CD4-positive, alpha-beta memory T cell (primary cell): ENCODE measurements at regions of chr9 and their contacts with region 1.

Region 1: GRCh38 chr9:5628530-5629311 is at the start of gene RIC1:
- DNase-seq: peak; percentile 89 to 90 (median 90)
- H3K4me3 ChIP-seq: peak within 1 kb of the TSS; percentile 82 to 86
- H3K4me3 Mint-ChIP-seq: peak within 1 kb of the TSS; percentile 97 to 99 (median 98)
- H3K27ac ChIP-seq: peak within 1 kb of the TSS; percentile 89
- H3K27ac Mint-ChIP-seq: peak within 1 kb of the TSS; percentile 92 to 99 (median 97)
- H3K4me1 ChIP-seq: peaks cover 76% of the 10 kb centered on the region
- H3K4me1 Mint-ChIP-seq: peaks cover 44 to 65% (median 53%) of the 10 kb centered on the region in 4 donors
- H3K27me3 ChIP-seq: no peaks in the 10 kb centered on the region
- H3K27me3 Mint-ChIP-seq: no peaks in the 10 kb centered on the region
- total RNA-seq, gene RIC1: 26.3 to 27.1 TPM

Region 2: DNA sequence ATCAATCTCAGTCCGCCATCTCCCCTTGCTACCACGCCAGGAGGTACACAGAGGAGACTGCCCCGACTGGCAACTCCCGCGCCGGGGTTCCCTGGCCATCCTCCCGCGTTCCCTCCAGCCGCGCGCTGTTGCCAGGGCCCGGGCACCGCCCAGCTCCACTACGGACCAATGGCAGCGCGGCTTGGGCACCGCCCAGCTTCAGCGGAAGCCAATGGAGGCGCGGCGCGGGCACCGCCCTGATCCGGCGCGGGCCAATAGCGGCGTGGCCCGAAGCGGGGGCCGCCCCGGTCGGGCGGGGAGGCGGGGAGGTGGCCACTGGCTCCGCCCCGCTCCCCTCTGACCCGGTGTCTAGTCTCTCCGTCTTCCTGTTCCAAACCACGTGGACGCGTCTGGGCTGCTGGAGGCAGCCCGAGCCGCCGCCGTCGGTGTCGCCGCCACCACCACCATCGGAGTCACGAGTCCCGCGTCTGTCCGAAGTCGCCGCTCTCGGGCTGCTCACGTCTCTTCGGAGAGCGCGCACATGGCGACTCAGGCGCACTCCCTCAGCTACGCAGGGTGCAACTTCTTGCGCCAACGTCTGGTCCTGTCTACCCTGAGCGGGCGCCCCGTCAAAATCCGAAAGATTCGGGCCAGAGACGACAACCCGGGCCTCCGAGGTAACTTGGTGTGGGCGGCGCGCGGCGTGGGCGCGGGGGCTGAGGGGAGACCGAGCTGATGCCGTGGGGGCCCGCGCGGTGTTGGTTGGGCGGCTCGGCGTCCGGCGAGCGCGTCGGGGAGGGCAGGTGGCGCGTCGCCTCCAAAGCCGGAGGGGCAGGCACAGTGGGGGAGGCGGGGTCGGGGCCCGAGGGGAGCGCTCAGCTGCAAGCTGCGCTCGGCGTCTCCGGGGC is 835.9 kb before region 1 on chr9 and contains the start of gene RCL1:
- CTCF ChIA-PET with region 1: no interaction called
- POLR2A ChIA-PET with region 1: interaction called, 14 read pairs
- intact Hi-C with region 1: loop called (anchors 1 kb)
- DNase-seq: peak; percentile 95 to 98 (median 97)
- H3K4me3 ChIP-seq: peak within 1 kb of the TSS; percentile 83 to 88
- H3K4me3 Mint-ChIP-seq: peak within 1 kb of the TSS; percentile 93 to 97 (median 95)
- H3K27ac ChIP-seq: peak within 1 kb of the TSS; percentile 70
- H3K27ac Mint-ChIP-seq: peak within 1 kb of the TSS; percentile 84 to 97 (median 96)
- H3K4me1 ChIP-seq: peaks cover 23% of the 10 kb centered on the region
- H3K4me1 Mint-ChIP-seq: peaks cover 29 to 52% (median 38%) of the 10 kb centered on the region in 4 donors
- H3K27me3 ChIP-seq: no peaks in the 10 kb centered on the region
- H3K27me3 Mint-ChIP-seq: peaks cover 0 to 4% of the 10 kb centered on the region in 2 donors
- total RNA-seq, gene RCL1: 15.2 to 17.8 TPM

Region 3: GRCh38 chr9:5450359-5451091 is 178.2 kb before region 1 on chr9 and contains the start of gene CD274:
- CTCF ChIA-PET with region 1: interaction called, 9 read pairs
- POLR2A ChIA-PET with region 1: interaction called, 37 read pairs
- intact Hi-C with region 1: loop called (anchors 1 kb)
- DNase-seq: peak; percentile 78 to 82 (median 80)
- H3K4me3 ChIP-seq: peak within 1 kb of the TSS; percentile 65 to 67
- H3K4me3 Mint-ChIP-seq: peak within 1 kb of the TSS; percentile 87 to 96 (median 94)
- H3K27ac ChIP-seq: peak within 1 kb of the TSS; percentile 97
- H3K27ac Mint-ChIP-seq: peak within 1 kb of the TSS; percentile 92 to 99 (median 95)
- H3K4me1 ChIP-seq: peaks cover 77% of the 10 kb centered on the region
- H3K4me1 Mint-ChIP-seq: peaks cover 50 to 89% (median 62%) of the 10 kb centered on the region in 4 donors
- H3K27me3 ChIP-seq: no peaks in the 10 kb centered on the region
- H3K27me3 Mint-ChIP-seq: no peaks in the 10 kb centered on the region
- total RNA-seq, gene CD274: 16.2 to 23.0 TPM

Region 4: DNA sequence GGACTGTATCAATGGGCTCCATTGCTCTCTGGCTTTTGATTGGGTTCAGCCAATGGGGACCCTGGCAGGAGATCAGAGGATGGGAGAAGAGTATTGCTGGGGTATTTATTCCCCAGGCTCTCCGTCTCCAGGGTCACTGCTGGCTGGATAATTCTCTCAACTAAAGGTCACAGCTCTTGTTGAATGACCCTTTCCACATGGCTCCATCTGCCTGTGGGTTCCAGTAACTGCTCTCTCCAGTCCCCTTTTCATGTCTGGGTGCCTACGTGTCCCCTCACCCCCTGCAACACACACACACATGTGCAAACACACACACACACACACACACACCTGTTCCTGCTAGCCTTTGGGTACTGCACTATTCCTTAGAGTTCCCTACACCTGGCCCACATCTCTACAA is 53.7 kb before region 1 on chr9:
- CTCF ChIA-PET with region 1: no interaction called
- POLR2A ChIA-PET with region 1: no interaction called
- intact Hi-C with region 1: no loop called
- DNase-seq: no peak
- H3K4me3 ChIP-seq: no peak overlapping the region
- H3K4me3 Mint-ChIP-seq: no peak overlapping the region
- H3K27ac ChIP-seq: no peak overlapping the region
- H3K27ac Mint-ChIP-seq: peak overlapping the region in 3 of 7 donors; percentile 16 to 58 (median 49)
- H3K4me1 ChIP-seq: peaks cover 4% of the 10 kb centered on the region
- H3K4me1 Mint-ChIP-seq: peaks cover 1 to 16% (median 9%) of the 10 kb centered on the region in 4 donors
- H3K27me3 ChIP-seq: no peaks in the 10 kb centered on the region
- H3K27me3 Mint-ChIP-seq: no peaks in the 10 kb centered on the region

Region 5: DNA sequence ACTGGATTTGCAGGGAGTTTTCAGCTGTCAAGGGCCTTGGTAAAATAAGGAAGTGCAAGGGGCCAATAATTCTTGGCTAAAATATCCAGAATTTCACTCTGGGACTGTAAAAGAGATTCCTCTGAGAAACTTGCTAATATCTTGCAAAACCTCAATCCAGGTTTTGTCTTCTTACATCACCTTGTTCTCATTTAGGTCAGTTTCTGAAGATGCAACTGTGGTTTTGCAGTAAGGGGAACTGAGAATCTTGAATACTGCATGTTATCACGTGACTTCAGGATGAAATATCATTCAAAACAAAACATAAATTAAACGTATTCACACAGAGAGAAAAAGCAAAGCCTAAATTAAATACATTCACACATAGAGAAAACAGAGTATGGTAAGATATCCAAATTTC is 34.8 kb before region 1 on chr9:
- CTCF ChIA-PET with region 1: interaction called, 14 read pairs
- POLR2A ChIA-PET with region 1: interaction called, 7 read pairs
- intact Hi-C with region 1: loop called (anchors 5 kb)
- DNase-seq: no peak
- H3K4me3 ChIP-seq: no peak overlapping the region
- H3K4me3 Mint-ChIP-seq: no peak overlapping the region
- H3K27ac ChIP-seq: no peak overlapping the region
- H3K27ac Mint-ChIP-seq: peak overlapping the region in 2 of 7 donors; percentile 3 to 15
- H3K4me1 ChIP-seq: peaks cover 5% of the 10 kb centered on the region
- H3K4me1 Mint-ChIP-seq: peaks cover 7 to 13% (median 8%) of the 10 kb centered on the region in 4 donors
- H3K27me3 ChIP-seq: no peaks in the 10 kb centered on the region
- H3K27me3 Mint-ChIP-seq: no peaks in the 10 kb centered on the region

Region 6: GRCh38 chr9:5714501-5715401 is 86.0 kb after region 1 on chr9:
- CTCF ChIA-PET with region 1: no interaction called
- POLR2A ChIA-PET with region 1: no interaction called
- intact Hi-C with region 1: loop called (anchors 5 kb)
- DNase-seq: no peak
- H3K4me3 ChIP-seq: no peak overlapping the region
- H3K4me3 Mint-ChIP-seq: no peak overlapping the region
- H3K27ac ChIP-seq: no peak overlapping the region
- H3K27ac Mint-ChIP-seq: peak overlapping the region in 1 of 7 donors; percentile 32
- H3K4me1 ChIP-seq: no peaks in the 10 kb centered on the region
- H3K4me1 Mint-ChIP-seq: peaks cover 0 to 8% (median 5%) of the 10 kb centered on the region in 4 donors
- H3K27me3 ChIP-seq: no peaks in the 10 kb centered on the region
- H3K27me3 Mint-ChIP-seq: no peaks in the 10 kb centered on the region

Region 7: DNA sequence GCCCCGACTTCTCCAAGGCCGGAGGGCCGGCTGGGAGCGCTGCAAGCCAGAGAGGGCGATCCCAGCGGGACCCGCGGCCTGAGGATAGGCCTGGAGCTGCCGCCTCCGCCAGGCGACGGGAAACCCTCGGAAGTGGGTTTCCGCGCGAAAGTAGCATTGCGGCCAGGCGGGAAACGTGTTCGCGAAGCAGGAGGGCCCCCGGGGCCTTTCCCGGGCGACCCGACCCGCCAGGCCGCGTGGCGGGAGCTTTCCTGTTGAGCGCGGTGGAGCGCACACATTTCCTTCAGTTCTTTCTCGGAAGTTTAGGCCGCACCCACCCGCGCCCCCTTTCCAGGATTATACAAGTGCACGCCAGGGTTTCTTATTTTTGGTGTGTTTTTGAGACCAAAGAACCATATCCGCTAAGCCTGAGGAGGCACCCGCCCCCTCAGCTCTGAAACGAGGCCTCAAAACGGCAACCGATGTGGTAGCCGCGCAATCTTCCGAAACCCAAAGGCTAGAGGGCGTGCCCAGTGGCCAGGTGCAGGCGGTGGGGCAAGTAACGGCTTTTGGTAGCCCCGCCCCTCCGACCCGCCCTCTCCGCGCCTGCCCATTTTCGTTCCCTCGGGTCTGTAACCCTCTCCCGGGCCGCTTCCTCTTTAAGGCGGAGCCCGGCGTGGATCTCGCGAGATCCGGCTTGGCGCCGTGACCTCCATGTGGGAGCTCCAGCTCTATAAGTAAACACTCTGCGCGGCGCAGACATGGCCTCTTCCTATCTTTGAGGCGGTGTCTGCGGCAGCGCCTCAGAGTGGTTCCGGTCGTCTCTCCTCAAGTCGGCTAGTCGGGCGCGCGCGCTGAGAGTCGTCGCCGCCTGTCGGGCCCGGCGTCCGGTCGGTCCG is 784.0 kb after region 1 on chr9 and contains the start of gene UHRF2:
- CTCF ChIA-PET with region 1: no interaction called
- POLR2A ChIA-PET with region 1: interaction called, 11 read pairs
- intact Hi-C with region 1: loop called (anchors 1 kb)
- DNase-seq: peak; percentile 96 to 99 (median 98)
- H3K4me3 ChIP-seq: peak within 1 kb of the TSS; percentile 77 to 91
- H3K4me3 Mint-ChIP-seq: peak within 1 kb of the TSS; percentile 88 to 94 (median 92)
- H3K27ac ChIP-seq: peak within 1 kb of the TSS; percentile 72
- H3K27ac Mint-ChIP-seq: peak within 1 kb of the TSS; percentile 94 to 98 (median 96)
- H3K4me1 ChIP-seq: peaks cover 42% of the 10 kb centered on the region
- H3K4me1 Mint-ChIP-seq: peaks cover 28 to 45% (median 35%) of the 10 kb centered on the region in 4 donors
- H3K27me3 ChIP-seq: no peaks in the 10 kb centered on the region
- H3K27me3 Mint-ChIP-seq: peaks cover 0 to 1% of the 10 kb centered on the region in 2 donors
- total RNA-seq, gene UHRF2: 124 to 128 TPM